ENCODE measurements at regions of chr6 and their contacts with region 1.

Region 1: DNA sequence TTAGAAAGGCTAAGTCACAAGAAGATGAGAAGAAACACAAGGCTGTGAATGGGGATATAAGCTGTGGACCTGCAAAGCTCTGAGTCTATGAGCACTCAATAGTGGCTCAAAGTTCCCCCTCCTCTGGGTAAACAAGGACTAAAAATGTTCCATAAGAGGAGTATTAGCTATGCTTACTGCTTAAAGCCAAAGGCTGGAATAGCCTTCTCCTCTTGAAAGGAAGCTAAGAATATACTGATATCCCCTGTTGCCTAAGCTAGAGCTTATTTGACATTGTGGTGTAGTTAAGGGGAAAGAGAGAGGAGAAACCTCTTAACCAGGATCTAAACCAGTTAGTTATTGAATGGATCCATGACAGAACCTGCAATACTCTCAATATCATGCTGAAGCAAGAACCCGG is 45.8 kb downstream of the NOL7 start:
- DNase-seq: no peak
- H3K4me3 ChIP-seq: no peak overlapping the region
- H3K27ac ChIP-seq: no peak overlapping the region
- H3K4me1 ChIP-seq: no peaks in the 10 kb centered on the region
- H3K27me3 ChIP-seq: no peaks in the 10 kb centered on the region
- CTCF ChIP-seq: no peak
- POLR2A ChIP-seq: no peak

Region 2: GRCh38 chr6:13696226-13696625 is 35.3 kb after region 1 on chr6:
- CTCF ChIA-PET with region 1: interaction called, 4 read pairs
- POLR2A ChIA-PET with region 1: no interaction called
- dilution Hi-C with region 1: no loop called
- intact Hi-C with region 1: loop called (anchors 2 kb)
- DNase-seq: no peak
- H3K4me3 ChIP-seq: no peak overlapping the region
- H3K27ac ChIP-seq: no peak overlapping the region
- H3K4me1 ChIP-seq: no peaks in the 10 kb centered on the region
- H3K27me3 ChIP-seq: no peaks in the 10 kb centered on the region
- CTCF ChIP-seq: no peak
- POLR2A ChIP-seq: no peak